ENCODE measurements at regions of chr21 and their contacts with region 1.

Region 1: GRCh38 chr21:46635324-46636172 is at the start of gene PRMT2:
- DNase-seq: peak; percentile 93 to 96
- ATAC-seq: peak; percentile 92 to 94
- H3K4me3 ChIP-seq: peak within 1 kb of the TSS; percentile 65
- H3K27ac ChIP-seq: peak within 1 kb of the TSS; percentile 91 to 92
- H3K4me1 ChIP-seq: peaks cover 36% of the 10 kb centered on the region; the same call in 2 of the 3 replicates
- CTCF ChIP-seq: no peak
- EP300 ChIP-seq: no peak
- POLR2A ChIP-seq: peak; percentile 67
- RAD21 ChIP-seq: no peak
- polyA plus RNA-seq, gene PRMT2: 64.1 and 69.2 TPM in 2 replicates

Region 2: DNA sequence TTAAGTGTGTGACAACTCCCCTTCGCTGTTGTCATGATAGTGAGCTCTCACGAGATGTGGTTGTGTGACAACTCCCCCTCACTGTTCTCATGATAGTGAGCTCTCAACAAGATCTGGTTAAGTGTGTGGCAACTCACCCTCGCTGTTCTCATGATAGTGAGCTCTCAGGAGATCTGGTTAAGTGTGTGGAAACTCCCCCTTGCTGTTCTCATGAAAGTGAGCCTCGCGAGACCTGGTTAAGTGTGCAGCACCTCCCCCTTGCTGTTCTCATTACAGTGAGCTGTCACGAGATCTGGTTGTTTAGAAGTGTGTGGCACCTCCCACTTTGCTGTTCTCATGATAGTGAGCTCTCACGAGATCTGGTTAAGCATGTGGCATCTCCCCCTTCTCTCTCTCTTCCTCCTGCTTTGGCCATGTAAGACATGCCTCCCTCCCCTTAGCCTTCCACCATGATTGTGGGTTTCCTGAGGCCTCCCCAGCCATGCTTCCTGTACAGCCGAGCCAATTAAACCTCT is 381.9 kb before region 1 on chr21:
- CTCF ChIA-PET with region 1: no interaction called
- POLR2A ChIA-PET with region 1: interaction called, 11 read pairs
- DNase-seq: no peak
- ATAC-seq: no peak
- H3K4me3 ChIP-seq: no peak overlapping the region
- H3K27ac ChIP-seq: no peak overlapping the region
- H3K4me1 ChIP-seq: no peaks in the 10 kb centered on the region
- CTCF ChIP-seq: no peak
- EP300 ChIP-seq: no peak
- POLR2A ChIP-seq: no peak
- RAD21 ChIP-seq: no peak

Region 3: DNA sequence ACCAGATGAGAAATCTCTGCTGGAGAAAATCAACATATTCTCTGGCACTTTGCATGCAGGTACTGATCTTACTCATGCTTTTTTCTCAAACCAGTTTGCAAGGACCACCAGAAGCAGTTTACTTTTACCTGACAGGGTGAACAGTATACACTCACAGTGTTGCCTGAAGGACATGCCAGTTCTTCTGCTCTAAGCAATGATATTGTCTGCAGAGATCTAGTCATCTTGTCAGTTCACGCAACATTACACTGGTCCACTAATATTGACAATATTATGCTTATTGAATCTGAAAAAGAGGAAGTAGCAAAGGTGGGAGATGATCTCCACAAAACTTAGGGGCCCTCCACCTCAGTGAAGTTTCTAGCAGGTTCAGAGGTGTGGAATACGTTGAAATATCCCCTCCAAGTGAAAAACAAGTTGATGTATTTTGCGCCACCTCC is 26.9 kb before region 1 on chr21:
- CTCF ChIA-PET with region 1: interaction called, 3 read pairs
- POLR2A ChIA-PET with region 1: interaction called, 13 read pairs
- DNase-seq: no peak
- ATAC-seq: no peak
- H3K4me3 ChIP-seq: no peak overlapping the region
- H3K27ac ChIP-seq: no peak overlapping the region
- H3K4me1 ChIP-seq: no peaks in the 10 kb centered on the region
- CTCF ChIP-seq: no peak
- EP300 ChIP-seq: no peak
- POLR2A ChIP-seq: no peak
- RAD21 ChIP-seq: no peak

Region 4: GRCh38 chr21:46616050-46616449 is 19.5 kb before region 1 on chr21:
- CTCF ChIA-PET with region 1: no interaction called
- POLR2A ChIA-PET with region 1: interaction called, 12 read pairs
- DNase-seq: no peak
- ATAC-seq: no peak
- H3K4me3 ChIP-seq: no peak overlapping the region
- H3K27ac ChIP-seq: no peak overlapping the region
- H3K4me1 ChIP-seq: no peaks in the 10 kb centered on the region
- CTCF ChIP-seq: no peak
- EP300 ChIP-seq: no peak
- POLR2A ChIP-seq: no peak
- RAD21 ChIP-seq: no peak